ENCODE measurements at regions of chrX and their contacts with region 1.

Region 1: GRCh38 chrX:135185795-135186443 is 14.7 kb upstream of the CT55 start:
- DNase-seq: peak; percentile 65 to 74
- H3K4me3 ChIP-seq: no peak overlapping the region
- H3K4me1 ChIP-seq: no peaks in the 10 kb centered on the region
- H3K27me3 ChIP-seq: peaks cover 35% of the 10 kb centered on the region

Region 2: GRCh38 chrX:134969726-134970125 is 216.2 kb before region 1 on chrX:
- in situ Hi-C with region 1: loop called (anchors 25 kb)
- DNase-seq: no peak
- H3K4me3 ChIP-seq: no peak overlapping the region
- H3K4me1 ChIP-seq: no peaks in the 10 kb centered on the region
- H3K27me3 ChIP-seq: no peaks in the 10 kb centered on the region

Region 3: DNA sequence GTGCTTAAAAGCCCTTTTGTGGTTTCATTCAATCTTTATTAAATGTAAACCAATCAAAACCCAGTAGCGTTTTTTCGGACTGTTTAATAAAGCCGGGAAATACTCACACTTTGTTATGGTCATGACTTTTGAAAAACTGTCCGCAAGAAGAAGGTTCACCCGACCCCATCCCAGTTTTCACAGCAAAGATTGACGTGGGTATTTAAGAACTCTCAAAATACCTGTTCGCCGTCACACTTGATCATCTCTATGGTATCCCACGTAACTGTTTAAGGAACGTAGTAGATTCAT is 86.5 kb before region 1 on chrX:
- in situ Hi-C with region 1: no loop called
- DNase-seq: no peak
- H3K4me3 ChIP-seq: no peak overlapping the region
- H3K4me1 ChIP-seq: no peaks in the 10 kb centered on the region
- H3K27me3 ChIP-seq: peaks cover 34% of the 10 kb centered on the region

Region 4: DNA sequence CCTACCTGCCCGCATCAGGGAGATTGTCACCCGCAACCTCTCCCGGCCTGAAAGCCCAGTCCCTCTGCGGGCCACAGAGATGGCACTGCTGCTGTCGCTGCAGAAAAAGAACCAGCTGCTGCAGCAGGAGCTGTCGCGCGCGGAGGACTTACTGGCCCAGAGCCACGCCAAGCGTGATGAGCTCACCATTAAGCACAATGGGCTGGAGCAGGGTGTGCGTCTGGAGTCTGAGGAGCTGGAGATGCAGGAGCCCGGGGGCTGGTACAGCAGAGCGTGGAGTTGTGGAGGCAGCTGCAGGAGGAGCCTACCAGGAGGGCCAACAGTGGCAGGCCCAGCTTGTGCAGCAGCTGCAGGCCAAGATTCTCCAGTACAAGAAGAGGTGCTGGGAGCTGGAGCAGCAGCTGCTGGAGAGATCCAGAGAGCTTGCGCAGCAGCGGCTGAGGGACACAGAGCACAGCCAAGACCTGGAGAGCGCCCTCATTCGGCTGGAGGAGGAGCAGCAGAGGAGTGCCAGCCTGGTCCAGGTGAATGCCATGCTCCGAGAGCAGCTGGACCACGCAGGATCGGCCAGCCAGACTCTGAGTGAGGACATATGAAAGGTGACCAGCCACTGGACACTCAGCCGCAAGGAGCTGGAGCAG is 247.1 kb after region 1 on chrX:
- in situ Hi-C with region 1: no loop called
- DNase-seq: no peak
- H3K4me3 ChIP-seq: no peak overlapping the region
- H3K4me1 ChIP-seq: no peaks in the 10 kb centered on the region
- H3K27me3 ChIP-seq: no peaks in the 10 kb centered on the region

Measured in HAP-1 (cell line).